ENCODE measurements at regions of chr1 and their contacts with region 1.

Region 1: DNA sequence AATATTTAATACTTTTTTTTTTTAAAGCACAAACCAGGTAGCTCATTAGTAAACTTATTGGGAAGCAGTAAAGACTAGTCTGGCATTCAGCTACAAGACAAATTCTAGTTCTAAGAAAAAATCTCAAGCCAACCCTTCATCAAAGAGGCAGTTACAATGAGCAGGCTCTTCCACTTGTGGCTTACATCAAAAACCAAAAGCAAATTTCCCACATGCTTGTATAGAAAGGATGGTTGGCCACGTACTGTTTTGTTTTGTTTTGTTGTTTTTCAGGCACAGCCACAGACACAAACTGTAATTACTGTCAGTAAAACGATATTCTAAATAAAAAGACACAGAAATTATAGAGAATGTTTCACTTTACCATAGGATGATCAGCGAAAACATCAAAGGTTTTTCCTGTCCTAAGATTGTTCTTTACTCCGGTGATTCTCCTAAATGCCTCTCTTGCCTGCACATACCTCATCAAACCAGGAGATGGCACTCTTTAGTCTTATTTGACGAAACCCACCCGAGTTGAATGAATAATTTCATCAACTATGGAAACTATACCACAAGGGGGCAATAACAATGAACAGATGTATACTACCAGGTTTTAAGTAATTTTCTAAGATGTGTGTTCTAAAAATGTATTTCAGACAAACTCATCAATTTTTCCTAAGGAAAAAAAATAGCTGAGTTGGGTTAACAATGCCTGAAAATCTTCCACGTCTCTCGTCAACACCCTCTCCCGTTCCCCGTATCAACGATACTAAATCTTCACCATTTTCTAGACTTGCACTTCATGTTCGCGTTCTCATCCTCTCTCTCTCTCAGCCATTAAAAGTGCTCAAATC is 26.9 kb downstream of the RPL5 start:
- DNase-seq: peak; percentile 68
- ATAC-seq: peak; percentile 95
- H3K4me3 Mint-ChIP-seq: peak overlapping the region; percentile 36
- H3K27ac Mint-ChIP-seq: peak overlapping the region; percentile 63
- H3K4me1 Mint-ChIP-seq: peaks cover 20% of the 10 kb centered on the region
- H3K27me3 Mint-ChIP-seq: no peaks in the 10 kb centered on the region
- CTCF ChIP-seq: peak; percentile 95

Region 2: GRCh38 chr1:92831762-92832536 is 26.8 kb before region 1 on chr1 and contains the start of gene RPL5:
- CTCF ChIA-PET with region 1: interaction called, 12 read pairs
- POLR2A ChIA-PET with region 1: interaction called, 8 read pairs
- intact Hi-C with region 1: no loop called
- DNase-seq: peak; percentile 98
- ATAC-seq: peak; percentile 93
- H3K4me3 Mint-ChIP-seq: peak within 1 kb of the TSS; percentile 99
- H3K27ac Mint-ChIP-seq: peak within 1 kb of the TSS; percentile 99
- H3K4me1 Mint-ChIP-seq: peaks cover 28% of the 10 kb centered on the region
- H3K27me3 Mint-ChIP-seq: no peaks in the 10 kb centered on the region
- CTCF ChIP-seq: peak; percentile 95
- total RNA-seq, gene RPL5: 1,782 to 1,792 TPM

Region 3: DNA sequence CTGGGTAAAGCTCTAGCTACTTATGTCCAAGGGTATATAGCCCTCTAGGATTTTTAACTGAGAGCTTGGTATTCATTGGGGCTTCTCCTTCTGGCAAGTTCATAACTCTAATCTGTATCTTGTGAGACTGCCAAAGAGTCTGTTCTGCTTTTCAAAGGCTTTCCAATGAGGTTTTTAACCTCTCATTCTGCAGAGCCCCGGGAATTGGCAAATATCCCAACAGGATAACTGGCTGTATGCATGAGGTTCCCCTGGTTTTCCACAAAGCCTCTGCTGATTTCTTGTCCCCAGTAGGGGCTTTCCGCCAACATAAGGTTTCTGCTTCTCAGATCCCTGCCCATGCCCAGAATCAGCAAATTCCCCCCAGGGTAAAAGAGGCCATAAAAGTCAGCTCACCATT is 13.9 kb after region 1 on chr1:
- CTCF ChIA-PET with region 1: interaction called, 40 read pairs
- POLR2A ChIA-PET with region 1: no interaction called
- intact Hi-C with region 1: no loop called
- DNase-seq: no peak
- ATAC-seq: no peak
- H3K4me3 Mint-ChIP-seq: no peak overlapping the region
- H3K27ac Mint-ChIP-seq: no peak overlapping the region
- H3K4me1 Mint-ChIP-seq: peaks cover 21% of the 10 kb centered on the region
- H3K27me3 Mint-ChIP-seq: no peaks in the 10 kb centered on the region
- CTCF ChIP-seq: no peak

Region 4: GRCh38 chr1:92882819-92883218 is 24.0 kb after region 1 on chr1:
- CTCF ChIA-PET with region 1: interaction called, 25 read pairs
- POLR2A ChIA-PET with region 1: no interaction called
- intact Hi-C with region 1: no loop called
- DNase-seq: peak; percentile 46
- ATAC-seq: peak; percentile 83
- H3K4me3 Mint-ChIP-seq: no peak overlapping the region
- H3K27ac Mint-ChIP-seq: peak overlapping the region; percentile 82
- H3K4me1 Mint-ChIP-seq: peaks cover 29% of the 10 kb centered on the region
- H3K27me3 Mint-ChIP-seq: no peaks in the 10 kb centered on the region
- CTCF ChIP-seq: no peak

Region 5: DNA sequence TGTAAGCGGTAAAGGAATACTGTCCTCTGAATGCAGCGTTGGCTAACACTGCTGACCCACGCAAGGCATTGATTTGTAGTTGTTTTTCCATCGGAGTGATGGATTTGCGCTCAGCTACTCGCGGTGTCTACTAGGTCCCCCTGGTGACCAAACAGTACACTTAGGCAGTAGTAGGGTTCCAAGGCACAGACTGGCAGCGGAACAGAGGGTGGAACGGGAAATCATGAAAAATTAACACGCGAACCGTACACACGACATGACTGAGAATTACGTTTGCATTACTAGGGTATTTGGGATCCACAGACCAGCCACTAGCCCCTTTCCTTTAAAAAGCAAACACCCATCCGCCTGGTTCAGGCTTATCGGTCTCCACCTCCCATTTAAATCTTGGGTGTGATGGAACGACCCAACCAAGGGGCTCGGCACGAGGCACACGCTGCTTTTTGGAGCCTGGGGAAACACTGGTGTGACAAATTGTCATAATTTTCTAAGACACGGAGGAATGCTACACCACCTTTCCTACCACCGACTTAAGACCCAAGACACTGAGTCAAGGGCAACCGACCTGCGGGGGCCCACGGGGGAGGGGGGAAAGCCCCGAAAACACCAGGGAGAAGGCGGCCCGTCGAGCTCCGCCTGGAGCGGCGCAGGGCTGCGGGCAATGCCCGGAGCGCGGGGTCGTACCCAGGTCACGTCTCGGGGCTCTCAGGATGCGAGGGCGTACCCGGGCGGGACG is 101.8 kb after region 1 on chr1:
- CTCF ChIA-PET with region 1: interaction called, 175 read pairs
- POLR2A ChIA-PET with region 1: interaction called, 16 read pairs
- intact Hi-C with region 1: loop called (anchors 2 kb)
- DNase-seq: peak; percentile 76
- ATAC-seq: peak; percentile 50
- H3K4me3 Mint-ChIP-seq: peak overlapping the region; percentile 95
- H3K27ac Mint-ChIP-seq: peak overlapping the region; percentile 97
- H3K4me1 Mint-ChIP-seq: peaks cover 36% of the 10 kb centered on the region
- H3K27me3 Mint-ChIP-seq: no peaks in the 10 kb centered on the region
- CTCF ChIP-seq: peak; percentile 11

Region 6: DNA sequence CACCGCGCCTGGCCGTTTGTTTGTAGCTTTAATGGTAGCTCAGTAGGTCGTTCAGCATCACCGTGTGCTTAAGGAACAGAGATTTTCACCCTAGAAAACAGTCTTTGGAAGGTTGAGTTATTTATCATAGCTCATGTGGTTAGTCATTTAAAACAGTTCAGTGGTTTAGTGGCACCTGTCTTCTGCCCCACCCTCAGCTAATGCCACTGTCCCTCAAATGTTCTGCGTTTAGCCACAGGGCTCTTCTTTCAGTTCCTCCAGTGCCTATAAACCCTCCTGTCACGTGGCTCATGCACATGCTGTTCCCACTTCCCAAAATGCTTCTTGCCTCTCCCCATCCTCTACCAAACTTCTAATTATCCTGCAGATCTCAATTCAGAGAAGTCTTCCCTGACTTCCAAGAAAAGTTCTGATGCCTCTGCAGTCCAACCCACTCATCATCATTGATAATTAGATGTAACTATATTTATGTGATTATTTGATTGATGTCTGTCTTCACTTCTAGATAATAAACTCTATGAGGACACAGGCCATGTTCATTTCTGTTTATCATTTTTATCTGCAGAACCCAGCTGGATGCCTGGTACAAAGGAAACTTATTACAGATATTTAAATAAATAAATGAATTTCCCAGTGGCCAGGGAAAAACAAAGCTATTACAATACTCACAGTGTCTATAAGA is 116.9 kb after region 1 on chr1:
- CTCF ChIA-PET with region 1: interaction called, 50 read pairs
- POLR2A ChIA-PET with region 1: no interaction called
- intact Hi-C with region 1: no loop called
- DNase-seq: peak; percentile 48
- ATAC-seq: peak; percentile 12
- H3K4me3 Mint-ChIP-seq: no peak overlapping the region
- H3K27ac Mint-ChIP-seq: peak overlapping the region; percentile 95
- H3K4me1 Mint-ChIP-seq: peaks cover 73% of the 10 kb centered on the region
- H3K27me3 Mint-ChIP-seq: no peaks in the 10 kb centered on the region
- CTCF ChIP-seq: no peak

Region 7: DNA sequence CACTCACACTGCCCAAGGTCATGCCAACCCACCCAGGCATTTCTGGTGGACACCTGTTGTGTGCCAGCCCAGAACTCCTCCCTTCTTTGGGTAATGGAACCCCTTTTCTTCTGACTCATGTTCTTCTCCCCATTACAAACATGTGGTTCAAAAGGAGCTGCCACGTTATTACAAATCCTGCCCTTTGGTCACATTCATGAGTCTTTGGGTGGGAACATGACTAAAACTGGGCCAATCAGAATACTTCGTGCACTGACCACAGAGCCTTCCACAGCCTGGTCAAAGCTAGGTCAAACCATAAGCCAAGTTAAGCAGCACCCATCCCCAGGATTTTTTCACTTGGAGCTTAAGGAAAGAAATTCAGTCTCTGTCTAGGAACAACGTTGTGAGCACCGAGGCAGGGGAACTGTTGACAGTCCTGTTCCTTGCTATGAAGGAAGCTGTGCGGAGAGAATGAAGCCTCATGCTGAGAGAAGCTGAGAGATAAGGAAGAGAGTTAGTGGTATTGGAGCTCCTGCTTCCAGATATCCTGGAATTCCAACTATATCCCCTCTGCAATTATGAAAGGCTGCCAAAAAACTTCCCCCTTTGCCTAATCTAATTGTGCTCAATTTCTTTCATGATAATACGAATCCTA is 149.3 kb after region 1 on chr1:
- CTCF ChIA-PET with region 1: interaction called, 14 read pairs
- POLR2A ChIA-PET with region 1: no interaction called
- intact Hi-C with region 1: no loop called
- DNase-seq: no peak
- ATAC-seq: no peak
- H3K4me3 Mint-ChIP-seq: no peak overlapping the region
- H3K27ac Mint-ChIP-seq: no peak overlapping the region
- H3K4me1 Mint-ChIP-seq: no peaks in the 10 kb centered on the region
- H3K27me3 Mint-ChIP-seq: peaks cover 4% of the 10 kb centered on the region
- CTCF ChIP-seq: no peak

Region 8: GRCh38 chr1:93123201-93123783 is 264.5 kb after region 1 on chr1:
- CTCF ChIA-PET with region 1: no interaction called
- POLR2A ChIA-PET with region 1: no interaction called
- intact Hi-C with region 1: no loop called
- DNase-seq: no peak
- ATAC-seq: no peak
- H3K4me3 Mint-ChIP-seq: no peak overlapping the region
- H3K27ac Mint-ChIP-seq: no peak overlapping the region
- H3K4me1 Mint-ChIP-seq: no peaks in the 10 kb centered on the region
- H3K27me3 Mint-ChIP-seq: no peaks in the 10 kb centered on the region
- CTCF ChIP-seq: no peak